Breast epithelium (tissue), 4 donors: ENCODE measurements at regions of chr6 and their contacts with region 1.

Region 1: GRCh38 chr6:45724511-45724910 is 291.1 kb downstream of the CLIC5 start:
- DNase-seq: peak in 1 of 2 donors; percentile 53
- H3K4me3 ChIP-seq: no peak overlapping the region
- H3K27ac ChIP-seq: no peak overlapping the region
- H3K4me1 ChIP-seq: no peaks in the 10 kb centered on the region
- H3K27me3 ChIP-seq: no peaks in the 10 kb centered on the region
- CTCF ChIP-seq: no peak
- POLR2A ChIP-seq: no peak

Region 2: GRCh38 chr6:44265007-44265721 is 1459.3 kb before region 1 on chr6 and contains the start of gene NFKBIE:
- intact Hi-C with region 1: no loop called
- DNase-seq: peak; percentile 90 to 93
- H3K4me3 ChIP-seq: peak within 1 kb of the TSS; percentile 74 to 90 (median 77)
- H3K27ac ChIP-seq: peak within 1 kb of the TSS; percentile 80 to 86
- H3K4me1 ChIP-seq: peaks cover 15 to 20% of the 10 kb centered on the region in 2 donors
- H3K27me3 ChIP-seq: peaks cover 0 to 2% of the 10 kb centered on the region in 2 donors
- CTCF ChIP-seq: peak in 1 of 3 donors; percentile 19
- POLR2A ChIP-seq: no peak
- total RNA-seq, gene NFKBIE: 4.0 to 25.9 (median 14.4) TPM

Region 3: GRCh38 chr6:44855562-44856411 is 868.7 kb before region 1 on chr6:
- intact Hi-C with region 1: no loop called
- DNase-seq: no peak
- H3K4me3 ChIP-seq: no peak overlapping the region
- H3K27ac ChIP-seq: no peak overlapping the region
- H3K4me1 ChIP-seq: no peaks in the 10 kb centered on the region
- H3K27me3 ChIP-seq: no peaks in the 10 kb centered on the region
- CTCF ChIP-seq: no peak
- POLR2A ChIP-seq: no peak

Region 4: DNA sequence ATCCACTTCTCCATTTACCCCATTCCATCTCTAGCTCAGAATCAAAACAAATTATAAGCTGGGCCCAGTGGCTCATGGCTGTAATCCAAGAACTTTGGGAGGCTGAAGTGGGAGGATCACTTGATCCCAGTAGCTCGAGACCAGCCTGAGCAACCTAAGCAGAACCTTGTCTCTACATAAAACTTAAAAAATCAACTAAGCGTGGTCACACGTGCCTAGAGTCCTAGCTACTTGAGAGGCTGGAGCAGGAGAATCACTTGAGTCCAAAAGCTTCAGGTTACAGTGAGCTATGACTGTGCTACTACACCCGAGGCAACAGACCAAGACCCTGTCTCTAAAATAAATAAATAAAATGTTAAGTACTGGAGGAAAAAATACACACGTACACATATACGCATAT is 471.1 kb before region 1 on chr6:
- intact Hi-C with region 1: no loop called
- DNase-seq: no peak
- H3K4me3 ChIP-seq: no peak overlapping the region
- H3K27ac ChIP-seq: no peak overlapping the region
- H3K4me1 ChIP-seq: no peaks in the 10 kb centered on the region
- H3K27me3 ChIP-seq: no peaks in the 10 kb centered on the region
- CTCF ChIP-seq: no peak
- POLR2A ChIP-seq: no peak

Region 5: DNA sequence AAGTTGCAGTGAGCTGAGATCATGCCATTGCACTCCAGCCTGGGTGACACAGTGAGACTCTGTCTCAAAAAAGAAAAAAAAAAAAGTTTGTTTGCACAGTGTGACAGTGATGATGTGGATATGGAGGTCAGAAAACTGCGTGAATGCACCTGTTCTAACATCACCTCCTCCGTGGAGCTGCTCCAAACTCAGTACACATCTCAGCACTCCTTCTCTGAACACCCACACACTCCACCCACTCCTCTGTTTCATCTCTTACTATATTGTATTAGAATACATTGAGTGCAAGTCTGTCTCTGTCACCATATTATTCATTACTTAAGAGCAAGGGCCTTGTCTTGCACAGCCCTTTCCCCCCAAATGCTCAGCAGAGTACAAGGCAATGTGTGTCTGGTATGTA is 353.8 kb after region 1 on chr6:
- intact Hi-C with region 1: no loop called
- DNase-seq: no peak
- H3K4me3 ChIP-seq: no peak overlapping the region
- H3K27ac ChIP-seq: no peak overlapping the region
- H3K4me1 ChIP-seq: no peaks in the 10 kb centered on the region
- H3K27me3 ChIP-seq: no peaks in the 10 kb centered on the region
- CTCF ChIP-seq: no peak
- POLR2A ChIP-seq: no peak

Region 6: DNA sequence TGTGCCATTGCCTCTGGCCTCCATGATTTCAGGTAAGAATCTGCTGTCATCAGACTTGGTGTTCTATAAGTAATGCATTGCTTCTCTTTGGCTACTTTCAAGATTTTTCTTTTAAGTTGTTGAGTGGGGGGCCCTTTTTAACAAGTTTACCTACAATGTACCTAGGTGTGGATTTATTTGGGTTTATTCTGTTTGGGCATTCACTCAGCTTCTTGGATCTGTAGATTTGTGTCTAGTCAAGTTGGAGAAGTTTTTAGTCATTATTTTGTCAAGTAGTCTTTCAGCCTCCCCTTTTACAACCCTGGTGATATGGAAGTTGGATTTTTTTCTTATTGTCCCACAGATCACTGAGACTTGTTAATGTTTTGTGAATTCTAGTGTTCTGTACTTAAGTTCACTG is 432.2 kb after region 1 on chr6:
- intact Hi-C with region 1: loop called (anchors 5 kb)
- DNase-seq: no peak
- H3K4me3 ChIP-seq: no peak overlapping the region
- H3K27ac ChIP-seq: no peak overlapping the region
- H3K4me1 ChIP-seq: no peaks in the 10 kb centered on the region
- H3K27me3 ChIP-seq: no peaks in the 10 kb centered on the region
- CTCF ChIP-seq: no peak
- POLR2A ChIP-seq: no peak